HepG2 (cell line): ENCODE measurements at regions of chr12 and their contacts with region 1.

Region 1: DNA sequence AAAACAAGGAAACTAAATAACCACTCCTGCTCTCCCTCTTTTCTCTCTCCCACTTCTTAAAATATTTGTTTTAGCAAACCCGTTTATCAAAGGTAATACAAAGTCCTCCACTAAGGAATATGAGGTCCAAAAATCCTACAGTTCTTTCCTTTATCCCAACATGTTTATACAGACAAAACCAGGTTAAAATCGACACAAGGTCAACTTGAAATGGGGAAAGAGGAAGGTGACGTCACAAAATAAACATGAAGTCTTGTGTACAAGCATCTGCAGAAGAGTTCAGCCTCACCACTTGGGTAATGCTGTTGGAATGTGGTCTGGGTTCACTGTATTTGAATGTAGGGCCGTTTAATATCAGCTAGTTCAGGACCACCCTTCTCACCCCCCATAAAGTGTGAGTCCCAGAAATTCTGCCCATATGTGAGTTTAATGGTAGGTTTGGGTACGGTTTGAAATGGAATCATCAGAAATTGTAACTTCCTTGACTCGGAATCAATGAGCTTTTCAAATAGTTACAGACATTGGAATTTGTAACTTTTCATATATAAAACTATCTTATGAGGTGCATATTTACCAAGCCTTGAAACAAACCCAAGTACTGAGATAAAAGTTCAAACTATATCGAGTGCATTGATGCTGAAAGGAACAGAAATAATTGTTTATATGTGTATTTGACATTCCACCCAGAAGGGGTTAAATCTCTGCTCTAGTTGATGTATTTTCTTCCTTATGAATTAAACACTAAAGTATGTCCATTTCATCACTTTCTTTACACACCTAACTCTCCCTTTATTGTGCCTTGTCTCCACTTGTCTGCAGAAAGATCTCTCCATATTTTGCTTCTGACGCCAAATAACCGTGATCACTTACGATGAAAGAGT is 120.1 kb upstream of the SLC38A2 start:
- DNase-seq: peak; percentile 100
- ATAC-seq: peak; percentile 89
- H3K4me3 ChIP-seq: peak overlapping the region in 2 of 3 experiments; percentile 39 to 45; a peak in 3 of 6 replicates
- H3K27ac ChIP-seq: peak overlapping the region; percentile 96
- H3K4me1 ChIP-seq: peaks cover 81% of the 10 kb centered on the region
- H3K27me3 ChIP-seq: no peaks in the 10 kb centered on the region
- CTCF ChIP-seq: 0 out of 2 replicates have a peak, but pooled peaks have one; percentile 6
- EP300 ChIP-seq: peak; percentile 96 to 100
- POLR2A ChIP-seq: peak in 1 of 2 experiments; percentile 38; a peak in 1 of 4 replicates
- RAD21 ChIP-seq: 0 out of 2 replicates have a peak, but pooled peaks have one; percentile 8

Region 2: GRCh38 chr12:46414591-46415268 is 78.0 kb before region 1 on chr12:
- CTCF ChIA-PET with region 1: no interaction called
- POLR2A ChIA-PET with region 1: no interaction called
- in situ Hi-C with region 1: no loop called
- intact Hi-C with region 1: no loop called
- DNase-seq: no peak
- ATAC-seq: no peak
- H3K4me3 ChIP-seq: no peak overlapping the region
- H3K27ac ChIP-seq: no peak overlapping the region
- H3K4me1 ChIP-seq: peaks cover 23% of the 10 kb centered on the region
- H3K27me3 ChIP-seq: no peaks in the 10 kb centered on the region
- CTCF ChIP-seq: no peak
- EP300 ChIP-seq: no peak
- POLR2A ChIP-seq: no peak
- RAD21 ChIP-seq: no peak

Region 3: DNA sequence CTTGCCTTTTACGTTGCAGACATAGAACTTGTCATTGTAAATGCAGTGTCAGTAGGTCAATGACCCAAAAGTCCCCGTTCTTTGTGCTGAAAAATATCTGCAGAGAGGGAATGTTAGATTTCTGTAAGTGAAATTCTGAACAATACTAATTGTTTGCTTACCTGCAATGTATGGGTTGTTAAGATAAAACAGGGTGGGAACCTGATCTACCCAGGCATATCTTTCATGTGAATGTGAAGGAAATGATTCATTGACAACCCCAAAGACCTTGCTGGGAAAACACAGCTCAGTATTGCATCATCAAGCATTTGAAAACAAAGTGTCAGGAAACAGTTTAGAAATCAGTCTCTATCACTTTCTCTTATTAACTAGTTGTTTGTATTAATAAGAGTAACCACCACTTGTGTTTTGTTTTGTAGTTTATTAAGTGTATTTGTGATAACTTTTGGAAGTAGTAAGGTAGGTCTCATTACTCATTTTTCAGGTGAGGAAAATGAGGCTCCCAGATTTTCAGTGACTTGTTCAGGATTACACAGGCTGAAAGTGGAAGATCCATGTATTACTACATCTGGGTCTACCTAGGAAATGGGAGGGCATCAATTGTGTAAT is 62.3 kb before region 1 on chr12:
- CTCF ChIA-PET with region 1: no interaction called
- POLR2A ChIA-PET with region 1: interaction called, 4 read pairs
- in situ Hi-C with region 1: no loop called
- intact Hi-C with region 1: loop called (anchors 1 kb)
- DNase-seq: peak; percentile 95
- ATAC-seq: peak; percentile 90
- H3K4me3 ChIP-seq: peak overlapping the region in 1 of 3 experiments; percentile 2; a peak in 2 of 6 replicates
- H3K27ac ChIP-seq: peak overlapping the region; percentile 58
- H3K4me1 ChIP-seq: peaks cover 37% of the 10 kb centered on the region
- H3K27me3 ChIP-seq: no peaks in the 10 kb centered on the region
- CTCF ChIP-seq: no peak
- EP300 ChIP-seq: peak in 1 of 2 experiments; percentile 92; a peak in 2 of 4 replicates
- POLR2A ChIP-seq: no peak
- RAD21 ChIP-seq: no peak

Region 4: GRCh38 chr12:46523863-46524770 is 31.4 kb after region 1 on chr12:
- CTCF ChIA-PET with region 1: no interaction called
- POLR2A ChIA-PET with region 1: interaction called, 18 read pairs
- in situ Hi-C with region 1: no loop called
- intact Hi-C with region 1: loop called (anchors 1 kb)
- DNase-seq: peak; percentile 92
- ATAC-seq: peak; percentile 89
- H3K4me3 ChIP-seq: peak overlapping the region; percentile 29 to 52 (median 38); a peak in 5 of 6 replicates
- H3K27ac ChIP-seq: peak overlapping the region; percentile 59
- H3K4me1 ChIP-seq: peaks cover 65% of the 10 kb centered on the region
- H3K27me3 ChIP-seq: no peaks in the 10 kb centered on the region
- CTCF ChIP-seq: no peak
- EP300 ChIP-seq: peak in 1 of 2 experiments; percentile 83; a peak in 2 of 4 replicates
- POLR2A ChIP-seq: peak in 1 of 2 experiments; percentile 38; a peak in 1 of 4 replicates
- RAD21 ChIP-seq: no peak

Region 5: GRCh38 chr12:46635818-46636217 is 143.1 kb after region 1 on chr12:
- CTCF ChIA-PET with region 1: no interaction called
- POLR2A ChIA-PET with region 1: no interaction called
- in situ Hi-C with region 1: no loop called
- intact Hi-C with region 1: no loop called
- DNase-seq: no peak
- ATAC-seq: no peak
- H3K4me3 ChIP-seq: no peak overlapping the region
- H3K27ac ChIP-seq: no peak overlapping the region
- H3K4me1 ChIP-seq: peaks cover 9% of the 10 kb centered on the region
- H3K27me3 ChIP-seq: no peaks in the 10 kb centered on the region
- CTCF ChIP-seq: no peak
- EP300 ChIP-seq: no peak
- POLR2A ChIP-seq: no peak
- RAD21 ChIP-seq: no peak

Region 6: DNA sequence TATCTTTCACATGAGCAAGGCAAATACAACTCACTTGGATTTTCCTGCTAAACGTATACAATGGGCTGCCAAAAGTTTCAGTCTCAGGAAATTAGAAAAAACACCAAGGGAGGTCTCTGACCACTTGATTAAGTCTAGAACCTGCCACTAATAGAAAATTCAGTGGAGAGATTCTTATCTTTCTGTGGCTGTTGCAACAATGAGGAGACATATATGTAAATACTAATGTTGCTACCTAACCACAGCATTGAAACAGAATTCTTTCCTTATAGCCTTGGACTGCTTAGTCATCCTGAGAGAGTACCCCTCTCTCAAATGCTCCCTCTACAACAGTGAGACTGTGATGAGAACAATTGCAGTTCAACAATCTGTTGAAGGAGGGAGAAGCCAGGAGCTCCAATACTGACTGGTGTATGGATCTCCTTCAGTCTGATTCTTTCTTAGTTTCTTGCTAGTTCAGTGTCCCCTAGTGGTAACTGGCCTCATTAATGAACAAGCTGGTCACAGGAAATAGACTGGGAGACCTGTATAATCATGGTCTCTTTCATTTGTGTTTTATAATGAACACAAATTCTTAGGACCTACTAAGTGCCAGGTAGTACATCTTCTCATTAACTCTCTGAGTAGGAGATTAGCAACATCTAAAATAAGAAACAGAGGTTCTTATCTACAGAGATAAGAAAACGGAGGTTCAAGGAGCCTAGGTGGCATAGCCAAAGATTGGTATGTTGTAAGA is 168.6 kb after region 1 on chr12:
- CTCF ChIA-PET with region 1: no interaction called
- POLR2A ChIA-PET with region 1: interaction called, 6 read pairs
- in situ Hi-C with region 1: no loop called
- intact Hi-C with region 1: loop called (anchors 2 kb)
- DNase-seq: peak; percentile 77
- ATAC-seq: peak; percentile 88
- H3K4me3 ChIP-seq: no peak overlapping the region
- H3K27ac ChIP-seq: peak overlapping the region; percentile 5
- H3K4me1 ChIP-seq: peaks cover 53% of the 10 kb centered on the region
- H3K27me3 ChIP-seq: no peaks in the 10 kb centered on the region
- CTCF ChIP-seq: peak; percentile 78
- EP300 ChIP-seq: no peak; a peak in 1 of 4 replicates
- POLR2A ChIP-seq: no peak
- RAD21 ChIP-seq: peak; percentile 75

Region 7: GRCh38 chr12:46933947-46934346 is 441.2 kb after region 1 on chr12:
- CTCF ChIA-PET with region 1: no interaction called
- POLR2A ChIA-PET with region 1: no interaction called
- in situ Hi-C with region 1: no loop called
- intact Hi-C with region 1: loop called (anchors 10 kb)
- DNase-seq: peak; percentile 49
- ATAC-seq: peak; percentile 87
- H3K4me3 ChIP-seq: peak overlapping the region in 2 of 3 experiments; percentile 14 to 31; a peak in 4 of 6 replicates
- H3K27ac ChIP-seq: no peak overlapping the region
- H3K4me1 ChIP-seq: peaks cover 42% of the 10 kb centered on the region
- H3K27me3 ChIP-seq: no peaks in the 10 kb centered on the region
- CTCF ChIP-seq: peak; percentile 83
- EP300 ChIP-seq: no peak
- POLR2A ChIP-seq: no peak
- RAD21 ChIP-seq: peak; percentile 33; the same call in 1 of the 2 replicates